Panc1 (cell line): ENCODE measurements at regions of chr20 and their contacts with region 1.

Region 1: DNA sequence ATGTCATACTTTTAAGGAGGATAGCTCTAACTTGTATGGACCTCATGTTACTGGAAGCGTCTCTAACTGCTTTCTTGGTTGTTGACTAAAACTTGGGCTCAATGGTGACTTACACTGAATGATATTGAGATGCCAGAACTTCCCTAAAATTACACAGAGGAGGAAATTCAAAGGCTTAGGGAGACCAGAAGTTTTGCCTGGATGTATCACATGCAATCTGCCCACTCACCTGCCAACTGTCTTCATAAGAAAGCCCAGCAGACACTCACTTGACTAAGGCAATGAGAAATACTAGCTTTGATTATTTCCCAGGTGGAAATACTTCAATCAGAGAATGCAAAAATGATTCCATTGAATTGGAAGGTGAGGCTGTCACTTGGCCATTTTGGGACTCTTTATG is 51.2 kb upstream of the PDYN start:
- DNase-seq: no peak
- ATAC-seq: no peak
- H3K4me3 ChIP-seq: no peak overlapping the region
- H3K27ac ChIP-seq: no peak overlapping the region
- H3K4me1 ChIP-seq: no peaks in the 10 kb centered on the region
- H3K27me3 ChIP-seq: peaks cover 34% of the 10 kb centered on the region
- CTCF ChIP-seq: no peak

Region 2: DNA sequence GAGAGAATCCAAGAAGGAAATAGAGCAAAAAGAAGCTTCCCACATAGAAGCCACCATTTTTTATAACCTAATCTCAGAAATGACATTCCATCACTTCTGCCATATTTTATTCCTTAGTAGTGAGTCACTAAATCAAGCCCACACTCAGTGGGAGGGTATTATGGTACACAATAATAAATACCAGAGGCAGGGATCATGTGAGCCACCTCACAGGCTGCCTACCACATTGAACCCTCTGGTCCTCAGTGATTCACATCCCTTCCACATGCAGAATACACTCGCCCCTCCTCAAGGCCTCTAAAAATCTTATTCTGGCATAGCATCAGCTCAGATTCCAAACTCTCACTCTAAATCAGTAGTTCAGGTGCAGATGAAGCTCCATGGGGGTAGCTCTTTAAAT is 540.7 kb after region 1 on chr20:
- CTCF ChIA-PET with region 1: interaction called, 12 read pairs
- POLR2A ChIA-PET with region 1: no interaction called
- in situ Hi-C with region 1: no loop called
- intact Hi-C with region 1: no loop called
- DNase-seq: no peak
- ATAC-seq: no peak
- H3K4me3 ChIP-seq: no peak overlapping the region
- H3K27ac ChIP-seq: no peak overlapping the region
- H3K4me1 ChIP-seq: no peaks in the 10 kb centered on the region
- H3K27me3 ChIP-seq: peaks cover 2% of the 10 kb centered on the region
- CTCF ChIP-seq: no peak